ENCODE measurements at regions of chr19 and their contacts with region 1.

Region 1: GRCh38 chr19:40603389-40604135 is 2.4 kb downstream of the LTBP4 start:
- DNase-seq: peak; percentile 97
- ATAC-seq: peak; percentile 66
- H3K4me3 ChIP-seq: peak overlapping the region; percentile 68
- H3K27ac ChIP-seq: no peak overlapping the region
- H3K4me1 ChIP-seq: peaks cover 36% of the 10 kb centered on the region
- H3K27me3 ChIP-seq: no peaks in the 10 kb centered on the region
- CTCF ChIP-seq: no peak

Region 2: GRCh38 chr19:40570313-40571004 is 33.1 kb before region 1 on chr19:
- CTCF ChIA-PET with region 1: no interaction called
- POLR2A ChIA-PET with region 1: no interaction called
- intact Hi-C with region 1: no loop called
- DNase-seq: peak; percentile 98
- ATAC-seq: peak; percentile 93
- H3K4me3 ChIP-seq: peak overlapping the region; percentile 71
- H3K27ac ChIP-seq: peak overlapping the region; percentile 54; the same call in 1 of the 2 replicates
- H3K4me1 ChIP-seq: peaks cover 6% of the 10 kb centered on the region
- H3K27me3 ChIP-seq: no peaks in the 10 kb centered on the region
- CTCF ChIP-seq: no peak

Region 3: GRCh38 chr19:40633207-40633606 is 29.6 kb after region 1 on chr19:
- CTCF ChIA-PET with region 1: interaction called, 16 read pairs
- POLR2A ChIA-PET with region 1: interaction called, 4 read pairs
- intact Hi-C with region 1: loop called (anchors 1 kb)
- DNase-seq: peak; percentile 89
- ATAC-seq: peak; percentile 85
- H3K4me3 ChIP-seq: no peak overlapping the region
- H3K27ac ChIP-seq: no peak overlapping the region
- H3K4me1 ChIP-seq: peaks cover 22% of the 10 kb centered on the region
- H3K27me3 ChIP-seq: no peaks in the 10 kb centered on the region
- CTCF ChIP-seq: no peak

Region 4: DNA sequence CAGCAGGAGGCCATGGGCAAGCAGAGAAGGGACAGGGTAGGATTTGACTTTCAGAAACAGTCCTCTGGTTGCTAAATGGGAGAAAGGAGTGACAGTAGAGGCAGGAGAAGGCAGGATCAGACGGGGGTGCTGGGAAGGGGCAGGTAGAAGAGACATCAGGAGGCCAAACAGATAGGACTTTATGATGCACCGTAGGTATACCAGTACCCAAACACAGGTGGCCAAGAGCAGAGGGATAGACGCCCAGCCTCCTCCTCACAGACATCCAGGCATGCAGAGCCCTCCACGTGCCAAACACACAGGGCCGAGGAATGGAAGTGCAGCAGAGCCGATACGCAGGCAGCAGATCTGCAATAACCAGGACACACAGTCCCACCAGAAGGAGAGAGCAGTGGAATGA is 614.2 kb after region 1 on chr19:
- CTCF ChIA-PET with region 1: interaction called, 13 read pairs
- POLR2A ChIA-PET with region 1: no interaction called
- intact Hi-C with region 1: no loop called
- DNase-seq: no peak
- ATAC-seq: no peak
- H3K4me3 ChIP-seq: no peak overlapping the region
- H3K27ac ChIP-seq: no peak overlapping the region
- H3K4me1 ChIP-seq: peaks cover 23% of the 10 kb centered on the region
- H3K27me3 ChIP-seq: no peaks in the 10 kb centered on the region
- CTCF ChIP-seq: no peak

Measured in PC-3 (cell line).